ACHN (cell line): ENCODE measurements at regions of chr6 and their contacts with region 1.

Region 1: GRCh38 chr6:146913842-146914488 is 290.3 kb upstream of the STXBP5 start:
- DNase-seq: peak; percentile 98

Region 2: GRCh38 chr6:147202516-147203312 is 288.7 kb after region 1 on chr6:
- in situ Hi-C with region 1: loop called (anchors 25 kb)
- DNase-seq: peak; percentile 96